PC-3 (cell line): ENCODE measurements at regions of chr12 and their contacts with region 1.

Region 1: GRCh38 chr12:32947206-32948067 is 50.9 kb upstream of the PKP2 start:
- DNase-seq: peak; percentile 72
- ATAC-seq: peak; percentile 59
- H3K4me3 ChIP-seq: no peak overlapping the region
- H3K27ac ChIP-seq: no peak overlapping the region
- H3K4me1 ChIP-seq: peaks cover 13% of the 10 kb centered on the region
- H3K27me3 ChIP-seq: no peaks in the 10 kb centered on the region
- CTCF ChIP-seq: peak; percentile 61

Region 2: GRCh38 chr12:33205981-33206380 is 258.5 kb after region 1 on chr12:
- CTCF ChIA-PET with region 1: no interaction called
- POLR2A ChIA-PET with region 1: no interaction called
- intact Hi-C with region 1: loop called (anchors 10 kb)
- DNase-seq: peak; percentile 56
- ATAC-seq: peak; percentile 87
- H3K4me3 ChIP-seq: peak overlapping the region; percentile 43; the same call in 1 of the 2 replicates
- H3K27ac ChIP-seq: peak overlapping the region; percentile 51
- H3K4me1 ChIP-seq: peaks cover 15% of the 10 kb centered on the region
- H3K27me3 ChIP-seq: no peaks in the 10 kb centered on the region
- CTCF ChIP-seq: no peak

Region 3: DNA sequence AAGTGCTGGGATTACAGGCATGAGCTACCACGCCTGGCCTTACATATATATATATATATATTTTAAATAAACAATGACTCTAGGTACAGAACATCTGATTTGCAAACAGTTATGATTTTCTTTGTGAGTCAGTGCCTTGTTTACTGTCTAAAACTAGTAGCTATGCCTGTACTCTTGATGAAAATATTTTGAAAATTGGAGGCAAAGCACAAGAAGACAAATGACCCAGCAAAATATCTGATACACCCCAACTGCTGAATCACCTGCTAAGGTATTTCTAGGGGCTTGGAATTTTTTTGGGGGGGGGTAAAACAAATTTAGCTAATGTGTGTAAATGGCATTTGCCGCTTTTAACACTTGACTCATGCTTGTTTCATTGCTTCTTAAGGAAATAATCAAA is 422.9 kb after region 1 on chr12:
- CTCF ChIA-PET with region 1: interaction called, 4 read pairs
- POLR2A ChIA-PET with region 1: no interaction called
- intact Hi-C with region 1: loop called (anchors 5 kb)
- DNase-seq: peak; percentile 85
- ATAC-seq: peak; percentile 93
- H3K4me3 ChIP-seq: no peak overlapping the region
- H3K27ac ChIP-seq: peak overlapping the region; percentile 26; the same call in 1 of the 2 replicates
- H3K4me1 ChIP-seq: peaks cover 31% of the 10 kb centered on the region
- H3K27me3 ChIP-seq: no peaks in the 10 kb centered on the region
- CTCF ChIP-seq: no peak

Region 4: DNA sequence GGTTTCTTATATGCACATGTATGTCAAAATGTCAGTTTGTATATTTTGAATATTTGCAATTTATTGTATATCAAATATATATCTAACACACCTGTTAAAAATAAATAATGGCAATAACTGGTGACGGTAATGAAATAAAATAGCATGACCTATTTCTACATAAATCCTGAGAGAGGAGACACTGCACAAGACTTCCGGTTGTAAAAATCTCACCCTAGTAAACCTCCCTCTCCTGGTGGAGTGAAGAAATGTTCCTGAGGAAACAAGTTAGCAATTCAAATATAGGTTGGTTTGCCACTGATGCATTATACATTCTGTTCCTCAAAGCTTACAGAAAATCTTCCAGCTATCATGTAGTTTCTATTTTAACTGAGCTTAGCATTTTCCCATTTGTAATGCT is 658.3 kb after region 1 on chr12:
- CTCF ChIA-PET with region 1: no interaction called
- POLR2A ChIA-PET with region 1: no interaction called
- intact Hi-C with region 1: loop called (anchors 5 kb)
- DNase-seq: peak; percentile 50
- ATAC-seq: no peak
- H3K4me3 ChIP-seq: no peak overlapping the region
- H3K27ac ChIP-seq: no peak overlapping the region
- H3K4me1 ChIP-seq: no peaks in the 10 kb centered on the region; the same call in 1 of the 2 replicates
- H3K27me3 ChIP-seq: no peaks in the 10 kb centered on the region
- CTCF ChIP-seq: peak; percentile 62

Region 5: GRCh38 chr12:34022079-34022830 is 1074.8 kb after region 1 on chr12 and contains the start of gene ALG10:
- CTCF ChIA-PET with region 1: no interaction called
- POLR2A ChIA-PET with region 1: interaction called, 13 read pairs
- intact Hi-C with region 1: loop called (anchors 1 kb)
- DNase-seq: peak; percentile 98
- ATAC-seq: peak; percentile 99
- H3K4me3 ChIP-seq: peak within 1 kb of the TSS; percentile 98
- H3K27ac ChIP-seq: peak within 1 kb of the TSS; percentile 57
- H3K4me1 ChIP-seq: peaks cover 12% of the 10 kb centered on the region; the same call in 1 of the 2 replicates
- H3K27me3 ChIP-seq: no peaks in the 10 kb centered on the region
- CTCF ChIP-seq: peak; percentile 69
- total RNA-seq, gene ALG10: 15.7 TPM in 2 replicates